Activated CD4-positive, alpha-beta T cell treated with anti-CD3 and anti-CD28 coated beads, Interleukin-2, amount 10 ng/mL, durations not matched to agents 7 days and 5 days (primary cell): ENCODE measurements at regions of chr12 and their contacts with region 1.

Region 1: DNA sequence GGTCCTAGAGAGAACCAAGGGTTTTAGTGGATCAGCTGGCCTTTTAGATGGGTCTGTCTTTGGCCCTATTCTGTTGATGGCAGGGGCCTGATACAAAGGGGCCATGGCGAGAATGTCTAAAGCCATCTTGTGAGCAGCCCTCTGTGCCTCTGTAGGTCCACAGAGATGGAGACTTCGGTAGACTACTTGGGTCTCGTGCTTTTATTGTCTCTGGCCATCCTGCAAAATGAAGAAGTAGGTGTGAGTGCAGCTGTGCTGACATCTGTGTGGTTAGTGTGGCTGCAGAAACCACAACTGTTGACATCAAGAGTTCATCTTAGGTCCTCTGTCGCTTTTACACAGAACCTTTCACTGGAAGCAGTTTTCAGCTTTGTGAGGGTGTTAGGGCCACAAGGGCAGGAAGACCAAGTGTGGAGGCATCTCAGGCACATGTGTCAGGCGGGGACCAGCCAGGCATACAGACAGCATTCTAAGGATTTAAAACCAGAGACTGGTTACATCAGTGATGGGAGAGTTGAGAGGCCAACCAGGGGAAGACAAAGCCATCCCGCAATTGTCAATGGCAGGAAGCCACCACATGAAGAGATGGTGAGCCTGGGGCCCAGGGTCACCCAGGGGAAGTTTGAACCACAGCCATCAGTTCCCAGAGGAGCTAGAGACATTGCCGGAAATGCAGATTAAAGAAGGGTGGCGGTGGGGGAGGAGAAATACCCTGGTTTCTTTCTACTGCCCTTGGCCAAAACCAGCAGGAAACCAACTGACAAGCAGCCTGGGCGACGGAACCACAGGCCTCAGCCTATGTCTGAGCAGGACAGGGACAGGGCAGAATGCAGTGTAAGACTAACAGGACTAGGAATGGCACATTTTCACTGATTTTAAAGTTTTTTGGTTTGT is 13.0 kb upstream of the TPCN1 start:
- DNase-seq: peak; percentile 82
- H3K4me3 Mint-ChIP-seq: peak overlapping the region; percentile 47
- H3K27ac Mint-ChIP-seq: peak overlapping the region; percentile 88
- H3K4me1 Mint-ChIP-seq: peaks cover 57% of the 10 kb centered on the region
- H3K27me3 Mint-ChIP-seq: no peaks in the 10 kb centered on the region

Region 2: GRCh38 chr12:113221181-113221997 is 13.1 kb after region 1 on chr12 and contains the start of gene TPCN1:
- CTCF ChIA-PET with region 1: interaction called, 20 read pairs
- POLR2A ChIA-PET with region 1: no interaction called
- DNase-seq: peak; percentile 100
- H3K4me3 Mint-ChIP-seq: peak within 1 kb of the TSS; percentile 76
- H3K27ac Mint-ChIP-seq: peak within 1 kb of the TSS; percentile 91
- H3K4me1 Mint-ChIP-seq: peaks cover 42% of the 10 kb centered on the region
- H3K27me3 Mint-ChIP-seq: peaks cover 2% of the 10 kb centered on the region
- total RNA-seq, gene TPCN1: 18.6 to 20.9 TPM

Region 3: DNA sequence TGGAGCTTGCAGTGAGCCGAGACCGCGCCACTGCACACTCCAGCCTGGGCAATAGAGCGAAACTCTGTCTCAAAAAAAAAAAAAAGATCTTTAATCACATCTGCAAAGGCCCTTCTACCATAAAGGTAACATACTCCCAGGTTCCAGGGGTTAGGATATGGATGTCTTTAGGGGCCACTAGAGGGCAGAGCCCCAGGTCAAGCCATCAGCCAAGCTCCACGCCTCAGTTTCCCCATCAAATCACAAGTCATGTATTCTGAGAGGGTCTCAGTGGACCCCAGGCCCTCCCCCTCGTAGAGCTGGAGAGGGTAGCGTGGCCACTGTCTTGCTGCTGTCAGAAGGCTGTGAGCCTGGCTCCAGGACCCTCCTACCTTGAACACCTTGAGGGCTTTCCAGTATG is 107.9 kb after region 1 on chr12:
- CTCF ChIA-PET with region 1: no interaction called
- POLR2A ChIA-PET with region 1: no interaction called
- DNase-seq: no peak
- H3K4me3 Mint-ChIP-seq: no peak overlapping the region
- H3K27ac Mint-ChIP-seq: no peak overlapping the region
- H3K4me1 Mint-ChIP-seq: no peaks in the 10 kb centered on the region
- H3K27me3 Mint-ChIP-seq: no peaks in the 10 kb centered on the region

Region 4: GRCh38 chr12:113569806-113570205 is 361.5 kb after region 1 on chr12:
- CTCF ChIA-PET with region 1: no interaction called
- POLR2A ChIA-PET with region 1: no interaction called
- DNase-seq: no peak
- H3K4me3 Mint-ChIP-seq: no peak overlapping the region
- H3K27ac Mint-ChIP-seq: no peak overlapping the region
- H3K4me1 Mint-ChIP-seq: no peaks in the 10 kb centered on the region
- H3K27me3 Mint-ChIP-seq: peaks cover 4% of the 10 kb centered on the region